Activated B cell treated with CpG ODN at 0.5 μM for 24 hours (primary cell): ENCODE measurements at regions of chr7 and their contacts with region 1.

Region 1: DNA sequence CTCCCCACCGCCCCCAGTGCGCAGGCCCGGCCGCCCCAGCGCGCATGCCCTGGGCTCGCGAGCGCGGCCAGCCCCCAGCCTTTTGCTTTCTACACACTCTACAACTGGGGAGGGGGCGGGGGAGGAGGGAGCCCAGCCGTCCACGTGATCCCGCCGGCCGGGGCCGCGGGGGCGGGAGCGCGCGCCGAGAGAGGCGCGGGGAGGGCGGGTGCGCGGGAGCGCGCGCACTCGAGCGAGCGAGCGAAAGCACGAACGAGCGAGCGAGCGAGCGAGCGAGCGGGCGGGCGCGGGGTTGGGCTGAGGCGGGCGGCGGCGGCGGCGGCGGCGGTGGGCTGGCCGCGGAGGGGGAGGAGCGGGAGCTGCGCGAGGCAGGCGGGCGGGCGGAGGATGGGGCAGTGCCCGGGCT is at the start of gene AUTS2:
- DNase-seq: peak; percentile 78
- ATAC-seq: peak; percentile 75
- H3K4me3 Mint-ChIP-seq: peak within 1 kb of the TSS; percentile 93
- H3K27ac Mint-ChIP-seq: peak within 1 kb of the TSS; percentile 83
- H3K4me1 Mint-ChIP-seq: peaks cover 16% of the 10 kb centered on the region
- H3K27me3 Mint-ChIP-seq: no peaks in the 10 kb centered on the region
- CTCF ChIP-seq: no peak
- total RNA-seq, gene AUTS2: 13.0 and 15.9 TPM in 2 replicates

Region 2: DNA sequence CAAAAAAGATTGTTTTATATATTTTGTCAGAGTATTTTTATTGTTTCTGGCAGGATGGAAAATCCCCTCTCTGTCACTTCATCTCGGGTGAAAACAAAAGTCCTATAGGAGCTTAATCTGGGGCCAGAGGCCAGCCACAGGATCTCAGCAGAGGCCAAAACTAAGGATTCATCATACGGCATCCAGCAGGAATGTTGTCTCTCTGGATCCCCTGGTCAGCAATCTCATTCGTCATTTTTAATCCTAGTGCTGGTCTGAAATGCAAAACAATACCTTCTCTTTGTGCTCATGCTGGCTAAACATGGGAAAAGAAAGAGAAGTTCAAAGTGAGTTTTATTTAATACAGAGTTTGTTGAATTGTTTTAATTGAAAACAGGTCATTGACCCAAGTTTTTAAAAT is 482.3 kb before region 1 on chr7:
- CTCF ChIA-PET with region 1: no interaction called
- POLR2A ChIA-PET with region 1: no interaction called
- intact Hi-C with region 1: no loop called
- DNase-seq: no peak
- ATAC-seq: no peak
- H3K4me3 Mint-ChIP-seq: no peak overlapping the region
- H3K27ac Mint-ChIP-seq: no peak overlapping the region
- H3K4me1 Mint-ChIP-seq: no peaks in the 10 kb centered on the region
- H3K27me3 Mint-ChIP-seq: peaks cover 2% of the 10 kb centered on the region
- CTCF ChIP-seq: no peak

Region 3: GRCh38 chr7:69630292-69630691 is 32.2 kb after region 1 on chr7:
- CTCF ChIA-PET with region 1: no interaction called
- POLR2A ChIA-PET with region 1: no interaction called
- intact Hi-C with region 1: no loop called
- DNase-seq: no peak
- ATAC-seq: no peak
- H3K4me3 Mint-ChIP-seq: no peak overlapping the region
- H3K27ac Mint-ChIP-seq: no peak overlapping the region
- H3K4me1 Mint-ChIP-seq: peaks cover 4% of the 10 kb centered on the region
- H3K27me3 Mint-ChIP-seq: no peaks in the 10 kb centered on the region
- CTCF ChIP-seq: no peak

Region 4: DNA sequence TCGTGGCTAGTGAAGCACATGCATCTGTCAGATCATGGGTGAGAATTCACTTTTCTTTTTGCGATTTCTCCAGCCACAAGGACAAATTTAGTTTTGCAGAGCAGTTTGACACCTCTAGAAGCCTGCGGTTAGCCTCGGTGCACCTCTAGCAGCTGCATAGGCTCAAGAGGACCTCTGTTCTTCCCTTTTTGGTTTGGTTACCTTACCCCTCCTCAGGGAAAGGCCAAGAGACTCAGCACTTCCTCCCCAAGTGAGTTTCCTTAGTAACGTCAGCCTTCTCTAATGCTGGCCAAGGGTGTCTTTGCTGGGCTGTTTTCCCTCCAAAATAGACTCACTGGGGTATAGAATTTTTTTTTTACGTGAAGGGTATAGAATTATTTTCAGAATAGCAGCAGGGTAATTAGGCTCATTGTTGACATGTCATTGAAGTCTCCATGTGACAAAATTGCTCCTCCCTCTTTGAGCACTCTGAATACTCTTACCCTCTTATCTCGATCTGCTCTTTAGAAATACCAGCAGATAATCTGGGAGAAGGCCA is 98.0 kb after region 1 on chr7:
- CTCF ChIA-PET with region 1: no interaction called
- POLR2A ChIA-PET with region 1: interaction called, 4 read pairs
- intact Hi-C with region 1: loop called (anchors 2 kb)
- DNase-seq: no peak
- ATAC-seq: peak; percentile 87
- H3K4me3 Mint-ChIP-seq: peak overlapping the region; percentile 13
- H3K27ac Mint-ChIP-seq: peak overlapping the region; percentile 56
- H3K4me1 Mint-ChIP-seq: peaks cover 43% of the 10 kb centered on the region
- H3K27me3 Mint-ChIP-seq: no peaks in the 10 kb centered on the region
- CTCF ChIP-seq: no peak

Region 5: DNA sequence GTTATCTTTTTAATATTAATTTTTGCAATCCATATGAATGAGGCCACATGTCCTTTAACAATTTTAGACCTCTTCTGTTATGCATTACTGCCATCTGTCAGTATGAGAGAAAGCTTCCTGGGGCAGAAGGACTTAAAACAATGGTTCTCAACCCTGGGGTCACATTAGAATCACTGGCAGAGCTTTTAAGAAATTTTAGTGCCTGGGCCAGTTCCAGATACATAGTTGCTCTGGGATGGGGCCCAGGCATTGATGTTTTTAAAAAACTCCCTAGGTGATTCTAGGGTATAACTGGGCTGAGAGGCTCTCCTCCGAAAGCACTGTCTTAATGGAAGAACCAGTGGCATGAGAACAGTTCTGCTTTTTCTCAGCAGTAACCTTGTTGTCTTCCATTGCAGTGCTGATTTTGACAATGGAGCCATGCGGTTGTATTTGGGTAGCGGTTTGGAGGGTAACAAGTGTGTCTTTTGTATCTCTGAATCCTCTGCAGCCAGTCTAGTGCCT is 227.1 kb after region 1 on chr7:
- CTCF ChIA-PET with region 1: no interaction called
- POLR2A ChIA-PET with region 1: interaction called, 5 read pairs
- intact Hi-C with region 1: loop called (anchors 1 kb)
- DNase-seq: no peak
- ATAC-seq: peak; percentile 18
- H3K4me3 Mint-ChIP-seq: peak overlapping the region; percentile 90
- H3K27ac Mint-ChIP-seq: peak overlapping the region; percentile 96
- H3K4me1 Mint-ChIP-seq: peaks cover 72% of the 10 kb centered on the region
- H3K27me3 Mint-ChIP-seq: no peaks in the 10 kb centered on the region
- CTCF ChIP-seq: no peak

Region 6: DNA sequence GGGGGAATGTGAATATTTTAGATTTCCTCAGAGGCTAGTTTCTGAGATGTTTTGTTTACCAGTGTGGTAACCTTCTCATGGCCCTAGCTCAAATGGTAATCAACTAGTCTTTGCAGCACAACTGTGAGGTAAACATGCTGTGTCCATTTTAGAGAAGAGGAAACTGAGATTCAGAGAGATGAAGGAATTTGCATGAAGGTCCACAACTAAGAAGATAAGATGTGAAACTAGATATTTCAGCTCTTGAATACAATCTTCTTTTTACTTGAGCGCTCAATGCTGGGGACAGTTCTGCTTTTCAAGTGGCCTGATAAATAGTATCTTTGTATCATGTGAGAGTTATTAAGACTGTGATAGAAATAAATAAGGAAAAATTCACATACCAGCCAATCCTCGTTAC is 245.6 kb after region 1 on chr7:
- CTCF ChIA-PET with region 1: no interaction called
- POLR2A ChIA-PET with region 1: no interaction called
- intact Hi-C with region 1: loop called (anchors 2 kb)
- DNase-seq: no peak
- ATAC-seq: peak; percentile 37
- H3K4me3 Mint-ChIP-seq: peak overlapping the region; percentile 12
- H3K27ac Mint-ChIP-seq: peak overlapping the region; percentile 59
- H3K4me1 Mint-ChIP-seq: peaks cover 76% of the 10 kb centered on the region
- H3K27me3 Mint-ChIP-seq: no peaks in the 10 kb centered on the region
- CTCF ChIP-seq: no peak